ENCODE measurements at regions of chr5 and their contacts with region 1.

Region 1: GRCh38 chr5:98773464-98774191 is at the start of gene RGMB:
- DNase-seq: peak; percentile 98
- H3K4me3 ChIP-seq: peak within 1 kb of the TSS; percentile 71 to 82 (median 80)
- H3K27ac ChIP-seq: peak within 1 kb of the TSS; percentile 76
- H3K4me1 ChIP-seq: peaks cover 42% of the 10 kb centered on the region
- H3K27me3 ChIP-seq: no peaks in the 10 kb centered on the region
- CTCF ChIP-seq: peak in 1 of 2 donors; percentile 17
- total RNA-seq, gene RGMB: 22.3 to 24.8 TPM

Region 2: DNA sequence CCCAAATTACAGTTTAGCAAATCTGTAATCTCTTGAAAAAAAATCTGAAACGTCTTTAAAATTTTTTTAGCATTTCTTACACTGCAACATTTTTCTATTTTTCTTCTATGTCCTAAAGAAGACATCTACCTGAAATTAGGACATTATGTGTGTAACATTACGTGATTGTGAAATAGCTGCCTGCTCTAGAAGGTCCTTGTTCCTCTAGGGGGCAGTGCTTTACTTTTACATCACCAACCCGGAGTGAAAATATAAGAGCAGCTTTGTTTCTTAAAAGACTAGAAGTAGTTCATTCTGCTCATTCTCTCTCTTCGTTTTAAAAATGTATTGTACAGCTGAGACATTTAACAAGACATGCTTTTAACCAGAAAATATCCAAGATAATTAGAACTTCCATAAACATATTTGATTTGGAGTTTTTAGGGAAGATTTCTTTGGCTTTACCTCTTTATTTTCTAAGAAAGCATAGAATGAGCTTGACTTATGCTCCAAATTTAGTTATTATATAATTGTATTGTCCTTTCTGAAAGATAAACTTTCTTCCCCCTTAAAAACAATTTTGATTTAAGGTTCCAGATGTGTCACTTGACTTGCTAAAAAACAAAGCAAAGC is 1542.5 kb before region 1 on chr5:
- CTCF ChIA-PET with region 1: no interaction called
- dilution Hi-C with region 1: no loop called
- in situ Hi-C with region 1: no loop called
- intact Hi-C with region 1: loop called (anchors 10 kb)
- DNase-seq: peak; percentile 58
- H3K4me3 ChIP-seq: no peak overlapping the region
- H3K27ac ChIP-seq: no peak overlapping the region
- H3K4me1 ChIP-seq: no peaks in the 10 kb centered on the region
- H3K27me3 ChIP-seq: no peaks in the 10 kb centered on the region
- CTCF ChIP-seq: peak; percentile 81 to 84

Region 3: DNA sequence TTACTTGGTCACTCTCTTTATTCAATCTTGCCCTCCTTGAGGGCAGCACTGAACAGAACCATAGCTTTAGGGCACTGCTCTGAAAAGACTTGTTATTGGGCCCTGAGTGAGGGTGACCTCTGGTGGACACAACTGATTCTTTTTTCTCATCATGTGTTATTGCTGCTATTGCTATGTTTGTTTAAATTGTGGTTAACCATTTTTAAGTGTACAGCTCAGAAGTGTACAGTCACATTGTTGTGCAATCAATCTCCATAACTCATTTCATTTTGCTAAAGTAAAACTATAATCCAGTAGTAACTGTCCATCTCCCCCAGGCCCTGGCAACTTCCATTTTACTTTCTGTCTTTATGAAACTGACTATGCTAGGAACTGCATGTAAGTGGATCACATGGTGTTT is 1239.5 kb before region 1 on chr5:
- CTCF ChIA-PET with region 1: no interaction called
- dilution Hi-C with region 1: no loop called
- in situ Hi-C with region 1: no loop called
- intact Hi-C with region 1: loop called (anchors 1 kb)
- DNase-seq: peak; percentile 85
- H3K4me3 ChIP-seq: no peak overlapping the region
- H3K27ac ChIP-seq: no peak overlapping the region
- H3K4me1 ChIP-seq: no peaks in the 10 kb centered on the region
- H3K27me3 ChIP-seq: no peaks in the 10 kb centered on the region
- CTCF ChIP-seq: peak; percentile 64 to 72

Region 4: DNA sequence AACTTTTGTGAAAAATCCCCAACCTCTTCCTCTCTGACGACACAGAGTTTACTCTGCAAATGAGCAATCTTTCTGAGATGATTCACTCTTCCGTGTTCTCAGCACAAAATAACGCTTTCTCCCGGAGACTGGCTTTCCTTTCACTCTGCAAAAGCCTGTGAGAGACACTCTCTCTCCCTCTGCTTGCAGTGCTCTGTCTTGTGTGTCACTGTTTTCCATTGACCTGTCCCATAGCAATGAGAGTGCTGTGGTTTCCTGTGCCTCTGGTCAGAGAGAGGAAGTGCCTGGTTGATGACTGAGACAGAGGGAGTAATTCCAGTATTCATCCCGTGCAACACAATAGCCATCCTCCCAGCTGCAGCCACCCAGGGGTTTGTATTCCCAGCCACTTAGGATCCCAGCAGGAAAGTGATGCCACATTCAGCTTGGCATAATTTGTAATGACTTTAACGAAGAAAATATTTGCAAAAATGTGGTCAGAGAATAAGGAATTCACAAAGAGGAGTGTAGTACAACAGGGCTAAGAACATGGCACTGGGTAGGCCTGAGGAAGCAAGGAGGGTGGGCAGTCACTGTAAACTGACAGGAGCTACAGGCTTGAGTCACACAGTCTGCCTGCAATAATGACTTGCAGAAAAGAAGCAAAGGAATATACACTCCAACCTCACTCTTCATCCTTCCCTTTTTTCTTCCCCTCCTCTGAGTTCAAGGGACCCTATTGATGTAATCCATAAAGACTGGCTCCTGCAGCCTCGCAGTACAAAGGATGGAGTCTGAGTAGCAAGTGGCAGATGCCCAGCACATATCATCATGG is 463.6 kb before region 1 on chr5:
- CTCF ChIA-PET with region 1: no interaction called
- dilution Hi-C with region 1: no loop called
- in situ Hi-C with region 1: no loop called
- intact Hi-C with region 1: loop called (anchors 1 kb)
- DNase-seq: peak; percentile 99
- H3K4me3 ChIP-seq: peak overlapping the region in 2 of 3 experiments; percentile 17 to 24
- H3K27ac ChIP-seq: peak overlapping the region; percentile 96
- H3K4me1 ChIP-seq: peaks cover 52% of the 10 kb centered on the region
- H3K27me3 ChIP-seq: no peaks in the 10 kb centered on the region
- CTCF ChIP-seq: no peak

Region 5: GRCh38 chr5:98796197-98796972 is 22.8 kb after region 1 on chr5:
- CTCF ChIA-PET with region 1: interaction called, 4 read pairs
- dilution Hi-C with region 1: no loop called
- in situ Hi-C with region 1: no loop called
- intact Hi-C with region 1: loop called (anchors 1 kb)
- DNase-seq: peak; percentile 41
- H3K4me3 ChIP-seq: no peak overlapping the region
- H3K27ac ChIP-seq: no peak overlapping the region
- H3K4me1 ChIP-seq: no peaks in the 10 kb centered on the region
- H3K27me3 ChIP-seq: no peaks in the 10 kb centered on the region
- CTCF ChIP-seq: peak; percentile 80 to 82

Region 6: DNA sequence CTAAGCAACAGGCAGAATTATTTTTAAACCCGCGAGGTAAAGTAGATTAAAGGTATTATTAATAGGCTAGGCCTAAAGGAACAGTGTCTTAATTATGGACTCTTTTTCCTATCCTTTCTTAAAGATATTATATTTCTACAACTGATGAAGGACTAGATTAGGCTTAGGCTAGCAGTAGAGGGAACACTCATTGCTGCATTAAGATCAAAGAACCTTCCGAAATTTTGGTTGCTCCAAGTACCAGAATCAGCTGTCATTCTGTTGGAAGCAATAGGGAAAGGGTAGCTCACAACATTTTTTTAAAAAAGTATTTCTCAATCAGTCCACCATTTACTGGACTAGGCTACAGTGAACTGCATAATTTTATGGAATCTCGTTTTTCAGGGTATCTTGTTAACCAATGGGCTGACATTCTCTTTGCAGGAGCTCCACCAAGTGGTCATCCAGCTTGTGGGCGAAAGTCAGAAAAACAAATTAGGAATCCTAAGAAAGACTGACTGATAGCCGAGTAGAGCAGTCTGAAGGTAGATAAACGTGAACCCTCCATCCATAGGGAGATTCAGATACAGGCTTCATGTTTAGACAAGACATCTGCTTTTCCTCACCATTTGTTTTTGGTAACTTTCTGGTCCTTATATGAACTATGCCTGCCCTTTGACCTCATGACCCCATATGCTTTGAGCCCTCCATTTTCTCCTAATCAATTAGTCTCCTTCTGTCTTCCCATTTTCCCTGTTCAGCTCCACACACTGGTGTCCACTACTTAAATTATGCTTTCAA is 258.8 kb after region 1 on chr5:
- CTCF ChIA-PET with region 1: no interaction called
- dilution Hi-C with region 1: no loop called
- in situ Hi-C with region 1: no loop called
- intact Hi-C with region 1: loop called (anchors 2 kb)
- DNase-seq: peak; percentile 65
- H3K4me3 ChIP-seq: peak overlapping the region in 2 of 3 experiments; percentile 45 to 47
- H3K27ac ChIP-seq: no peak overlapping the region
- H3K4me1 ChIP-seq: peaks cover 9% of the 10 kb centered on the region
- H3K27me3 ChIP-seq: no peaks in the 10 kb centered on the region
- CTCF ChIP-seq: peak; percentile 75 to 84

Measured in mammary epithelial cell (primary cell).